ENCODE measurements at regions of chr6 and their contacts with region 1.

Region 1: GRCh38 chr6:20401205-20402091 is at the start of gene E2F3:
- H3K4me3 Mint-ChIP-seq: peak within 1 kb of the TSS; percentile 93
- H3K27ac Mint-ChIP-seq: peak within 1 kb of the TSS; percentile 99
- H3K4me1 Mint-ChIP-seq: peaks cover 9% of the 10 kb centered on the region
- H3K27me3 Mint-ChIP-seq: no peaks in the 10 kb centered on the region

Region 2: DNA sequence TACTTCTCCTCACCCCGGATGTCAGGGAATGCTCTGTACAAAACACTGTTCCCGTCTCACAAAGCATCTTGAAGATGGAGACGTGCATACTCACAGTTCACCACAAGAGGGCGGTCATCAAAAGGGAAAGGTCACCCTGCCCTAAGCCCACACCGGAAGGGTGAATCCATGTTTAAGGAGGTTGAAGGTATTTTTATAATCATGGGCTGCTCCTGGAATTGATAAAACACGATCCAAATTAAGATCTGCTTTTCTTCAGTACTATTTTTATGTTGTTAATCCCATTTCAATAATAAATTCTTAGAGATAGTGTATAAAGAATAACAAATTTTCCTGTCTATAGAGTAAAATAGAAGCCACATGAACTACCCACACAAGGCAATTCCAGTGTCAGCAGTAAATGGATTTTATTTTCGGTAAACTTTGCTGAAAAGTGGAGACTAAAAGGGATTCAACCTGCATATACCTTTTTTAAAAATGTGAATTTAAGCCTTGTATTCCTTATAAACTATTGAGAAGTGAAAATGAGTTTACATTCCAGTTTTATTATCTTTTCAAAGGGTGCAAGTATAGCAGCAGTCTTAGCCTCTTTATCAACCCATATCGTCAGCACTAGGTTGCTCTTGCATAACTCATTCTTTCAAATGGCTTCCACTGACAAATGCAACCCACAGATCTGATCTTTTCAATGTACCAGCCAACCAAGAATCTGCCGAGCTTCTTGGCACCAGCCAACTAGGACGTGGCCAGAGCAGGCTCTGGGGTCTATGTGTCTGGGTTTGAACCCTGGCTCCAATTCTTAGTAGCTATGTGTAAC is 109.5 kb before region 1 on chr6:
- intact Hi-C with region 1: loop called (anchors 5 kb)
- H3K4me3 Mint-ChIP-seq: no peak overlapping the region
- H3K27ac Mint-ChIP-seq: no peak overlapping the region
- H3K4me1 Mint-ChIP-seq: no peaks in the 10 kb centered on the region
- H3K27me3 Mint-ChIP-seq: no peaks in the 10 kb centered on the region

Region 3: GRCh38 chr6:20319520-20320357 is 81.7 kb before region 1 on chr6:
- intact Hi-C with region 1: loop called (anchors 5 kb)
- H3K4me3 Mint-ChIP-seq: peak overlapping the region; percentile 46
- H3K27ac Mint-ChIP-seq: peak overlapping the region; percentile 86
- H3K4me1 Mint-ChIP-seq: peaks cover 29% of the 10 kb centered on the region
- H3K27me3 Mint-ChIP-seq: peaks cover 2% of the 10 kb centered on the region

Region 4: DNA sequence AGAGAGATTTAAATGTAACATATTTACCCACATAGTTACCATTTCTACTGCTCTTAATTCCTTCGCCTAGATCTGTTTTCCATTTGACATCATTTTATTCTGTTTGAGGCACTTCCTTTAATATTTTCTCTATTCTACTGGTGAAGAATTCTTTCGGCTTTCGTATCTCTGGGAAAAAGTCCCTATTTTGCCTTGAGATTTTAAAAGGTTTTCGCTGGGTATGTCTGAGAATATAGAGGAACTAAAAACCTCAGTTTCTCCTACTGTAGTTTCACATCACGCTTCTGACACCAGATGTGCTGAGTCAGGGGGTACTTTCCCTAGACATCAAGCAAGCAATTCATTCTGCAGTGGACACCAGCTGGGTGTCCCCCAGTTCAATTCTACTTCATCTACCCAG is 61.9 kb after region 1 on chr6:
- intact Hi-C with region 1: loop called (anchors 5 kb)
- H3K4me3 Mint-ChIP-seq: no peak overlapping the region
- H3K27ac Mint-ChIP-seq: peak overlapping the region; percentile 36
- H3K4me1 Mint-ChIP-seq: peaks cover 61% of the 10 kb centered on the region
- H3K27me3 Mint-ChIP-seq: no peaks in the 10 kb centered on the region

Region 5: GRCh38 chr6:20509212-20509611 is 107.8 kb after region 1 on chr6:
- intact Hi-C with region 1: no loop called
- H3K4me3 Mint-ChIP-seq: no peak overlapping the region
- H3K27ac Mint-ChIP-seq: no peak overlapping the region
- H3K4me1 Mint-ChIP-seq: no peaks in the 10 kb centered on the region
- H3K27me3 Mint-ChIP-seq: no peaks in the 10 kb centered on the region

Region 6: GRCh38 chr6:21594439-21595281 is 1193.2 kb after region 1 on chr6:
- intact Hi-C with region 1: loop called (anchors 5 kb)
- H3K4me3 Mint-ChIP-seq: no peak overlapping the region
- H3K27ac Mint-ChIP-seq: no peak overlapping the region
- H3K4me1 Mint-ChIP-seq: peaks cover 29% of the 10 kb centered on the region
- H3K27me3 Mint-ChIP-seq: peaks cover 1% of the 10 kb centered on the region

Measured in dendritic cell treated with granulocyte-macrophage colony-stimulating factor and Interleukin-4, amounts not matched to agents 40 ng/mL and 50 ng/mL, for 4 days (primary cell).